ENCODE measurements at regions of chr14 and their contacts with region 1.

Region 1: DNA sequence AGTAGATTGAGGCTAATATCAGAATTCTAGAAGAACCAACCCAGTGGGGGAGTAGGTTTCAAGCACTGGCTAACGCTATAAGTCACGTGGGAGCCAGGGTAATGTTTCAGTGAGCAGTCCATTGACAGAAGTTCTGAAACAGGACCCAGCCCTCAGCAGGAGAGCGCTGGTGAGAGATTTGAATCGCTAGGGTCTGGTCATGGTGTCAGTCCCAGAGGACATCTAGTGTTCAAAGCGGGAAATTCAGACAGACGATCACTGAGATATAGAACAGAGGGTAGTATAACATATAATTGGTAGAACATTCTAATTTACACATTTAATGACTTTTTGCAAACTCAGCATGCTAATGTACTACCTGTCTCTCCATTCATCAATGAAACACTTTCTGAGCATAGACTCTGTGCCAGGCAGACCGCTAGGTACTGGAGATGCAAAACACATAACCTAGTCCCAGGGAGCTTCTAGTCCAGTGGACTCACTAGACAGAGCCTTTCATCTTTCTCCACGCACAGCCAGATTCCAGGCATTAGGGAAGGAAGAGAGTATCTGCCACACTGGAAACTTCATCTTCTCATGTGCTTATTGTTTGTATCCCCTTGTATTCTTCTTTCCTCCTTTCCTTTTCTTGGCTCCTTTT is 35.4 kb upstream of the RNASE3 start:
- DNase-seq: peak; percentile 22
- ATAC-seq: peak; percentile 99
- H3K4me3 Mint-ChIP-seq: no peak overlapping the region
- H3K27ac Mint-ChIP-seq: no peak overlapping the region
- H3K4me1 Mint-ChIP-seq: peaks cover 4% of the 10 kb centered on the region
- H3K27me3 Mint-ChIP-seq: peaks cover 22% of the 10 kb centered on the region
- CTCF ChIP-seq: peak; percentile 56

Region 2: DNA sequence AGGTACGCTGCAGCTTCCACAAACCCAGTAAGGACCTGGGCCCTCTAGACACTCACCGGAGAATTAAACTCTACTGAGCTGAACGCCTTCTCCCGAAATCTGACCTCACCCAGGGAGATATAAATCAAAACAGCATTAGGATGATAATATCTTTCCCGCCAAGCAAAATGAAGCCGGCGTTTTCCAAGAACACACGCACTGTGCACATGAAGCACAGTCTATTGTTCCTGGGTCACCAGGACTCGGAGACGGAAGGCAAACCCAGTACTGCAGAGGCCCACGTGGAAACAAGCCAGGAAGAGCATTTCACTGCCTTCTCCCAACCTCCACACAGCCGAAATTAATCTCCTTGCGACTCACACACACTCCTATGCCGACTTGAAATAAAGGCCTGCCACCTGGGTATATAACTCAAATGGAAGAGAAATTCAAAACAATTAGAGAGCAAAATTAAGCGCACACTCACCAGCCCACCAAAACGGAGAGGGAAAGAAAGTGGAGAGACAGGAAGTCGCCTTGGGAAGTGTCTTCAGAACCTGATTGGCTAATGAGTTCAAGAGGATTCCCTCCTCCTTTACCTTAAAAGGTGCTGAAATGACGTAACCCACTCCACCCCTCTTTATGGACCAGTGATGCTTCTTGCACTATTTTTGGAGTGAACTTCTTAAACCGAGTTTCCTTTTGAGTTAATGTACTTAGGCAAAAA is 522.8 kb before region 1 on chr14 and contains the start of gene CCNB1IP1:
- CTCF ChIA-PET with region 1: no interaction called
- POLR2A ChIA-PET with region 1: no interaction called
- intact Hi-C with region 1: loop called (anchors 5 kb)
- DNase-seq: no peak
- ATAC-seq: peak; percentile 97
- H3K4me3 Mint-ChIP-seq: peak within 1 kb of the TSS; percentile 99
- H3K27ac Mint-ChIP-seq: peak within 1 kb of the TSS; percentile 89
- H3K4me1 Mint-ChIP-seq: peaks cover 29% of the 10 kb centered on the region
- H3K27me3 Mint-ChIP-seq: no peaks in the 10 kb centered on the region
- CTCF ChIP-seq: no peak
- total RNA-seq, gene CCNB1IP1: 34.0 and 35.3 TPM in 2 replicates

Region 3: GRCh38 chr14:20597103-20597502 is 258.7 kb before region 1 on chr14:
- CTCF ChIA-PET with region 1: no interaction called
- POLR2A ChIA-PET with region 1: no interaction called
- intact Hi-C with region 1: no loop called
- DNase-seq: no peak
- ATAC-seq: no peak
- H3K4me3 Mint-ChIP-seq: no peak overlapping the region
- H3K27ac Mint-ChIP-seq: no peak overlapping the region
- H3K4me1 Mint-ChIP-seq: no peaks in the 10 kb centered on the region
- H3K27me3 Mint-ChIP-seq: peaks cover 2% of the 10 kb centered on the region
- CTCF ChIP-seq: no peak

Region 4: DNA sequence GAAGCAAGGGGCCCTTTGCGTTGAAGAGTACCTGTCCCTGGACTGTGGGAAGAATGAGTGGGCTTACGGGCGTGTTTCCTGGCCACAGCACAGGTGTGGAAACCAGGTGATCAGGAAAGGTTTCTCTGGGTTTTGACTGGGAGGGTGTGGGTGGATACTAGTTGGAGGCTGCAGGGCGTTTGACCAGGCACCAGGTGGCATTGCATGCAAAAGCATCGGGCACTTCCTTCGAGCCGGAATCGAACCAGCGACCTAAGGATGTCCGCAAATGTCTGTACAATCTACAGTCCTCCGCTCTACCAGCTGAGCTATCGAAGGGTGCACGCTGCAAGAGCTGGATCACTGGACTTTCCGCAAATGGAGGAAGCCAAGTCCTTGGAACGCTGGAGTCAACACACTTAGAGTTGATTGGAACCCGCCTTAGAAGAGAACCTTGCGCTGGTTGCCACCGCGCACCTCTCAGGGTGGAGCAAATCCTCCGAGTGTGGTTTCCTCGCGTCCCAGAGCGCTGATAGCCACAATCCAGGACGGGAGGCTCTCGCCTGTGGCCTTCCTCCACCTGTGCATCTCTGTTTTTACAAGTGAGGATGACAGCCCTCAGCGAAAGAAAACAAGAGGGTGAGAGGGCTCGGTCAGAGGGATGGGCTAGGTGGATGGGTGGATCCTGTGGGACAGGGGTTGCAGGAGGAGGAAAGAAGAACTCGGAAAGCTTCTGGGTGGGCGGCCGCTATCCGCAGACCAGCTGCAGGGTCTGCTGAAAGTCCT is 192.6 kb before region 1 on chr14:
- CTCF ChIA-PET with region 1: interaction called, 4 read pairs
- POLR2A ChIA-PET with region 1: no interaction called
- intact Hi-C with region 1: loop called (anchors 1 kb)
- DNase-seq: peak; percentile 67
- ATAC-seq: peak; percentile 85
- H3K4me3 Mint-ChIP-seq: peak overlapping the region; percentile 87
- H3K27ac Mint-ChIP-seq: peak overlapping the region; percentile 67
- H3K4me1 Mint-ChIP-seq: peaks cover 53% of the 10 kb centered on the region
- H3K27me3 Mint-ChIP-seq: no peaks in the 10 kb centered on the region
- CTCF ChIP-seq: no peak

Region 5: GRCh38 chr14:20757965-20758364 is 97.8 kb before region 1 on chr14:
- CTCF ChIA-PET with region 1: interaction called, 15 read pairs
- POLR2A ChIA-PET with region 1: no interaction called
- intact Hi-C with region 1: loop called (anchors 1 kb)
- DNase-seq: no peak
- ATAC-seq: peak; percentile 25
- H3K4me3 Mint-ChIP-seq: no peak overlapping the region
- H3K27ac Mint-ChIP-seq: no peak overlapping the region
- H3K4me1 Mint-ChIP-seq: peaks cover 2% of the 10 kb centered on the region
- H3K27me3 Mint-ChIP-seq: no peaks in the 10 kb centered on the region
- CTCF ChIP-seq: no peak

Region 6: GRCh38 chr14:20809917-20810316 is 45.9 kb before region 1 on chr14:
- CTCF ChIA-PET with region 1: no interaction called
- POLR2A ChIA-PET with region 1: no interaction called
- intact Hi-C with region 1: no loop called
- DNase-seq: no peak
- ATAC-seq: no peak
- H3K4me3 Mint-ChIP-seq: no peak overlapping the region
- H3K27ac Mint-ChIP-seq: no peak overlapping the region
- H3K4me1 Mint-ChIP-seq: peaks cover 4% of the 10 kb centered on the region
- H3K27me3 Mint-ChIP-seq: peaks cover 10% of the 10 kb centered on the region
- CTCF ChIP-seq: no peak

Region 7: DNA sequence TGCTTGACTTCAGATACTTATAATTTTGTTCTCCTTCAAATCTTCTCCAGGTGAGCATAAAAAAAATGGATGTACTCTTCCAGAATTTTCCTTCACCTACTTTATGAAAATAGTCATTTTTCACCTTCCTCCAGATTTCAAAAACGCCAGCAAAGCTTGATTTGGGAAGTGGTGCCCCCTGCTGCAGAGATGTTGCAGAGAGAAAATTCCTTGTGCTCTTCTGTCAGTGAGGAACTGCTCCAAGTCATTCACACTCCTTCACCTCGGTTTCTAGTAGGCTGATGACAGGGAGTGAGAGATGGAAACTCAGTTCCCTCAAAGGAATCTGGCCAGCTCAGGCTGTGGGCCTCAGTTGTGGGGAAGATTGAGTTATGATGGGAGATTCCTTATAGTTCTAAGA is 11.2 kb after region 1 on chr14:
- CTCF ChIA-PET with region 1: interaction called, 29 read pairs
- POLR2A ChIA-PET with region 1: no interaction called
- intact Hi-C with region 1: no loop called
- DNase-seq: no peak
- ATAC-seq: no peak
- H3K4me3 Mint-ChIP-seq: no peak overlapping the region
- H3K27ac Mint-ChIP-seq: no peak overlapping the region
- H3K4me1 Mint-ChIP-seq: no peaks in the 10 kb centered on the region
- H3K27me3 Mint-ChIP-seq: peaks cover 30% of the 10 kb centered on the region
- CTCF ChIP-seq: no peak

Region 8: GRCh38 chr14:20970983-20971704 is 115.4 kb after region 1 on chr14:
- CTCF ChIA-PET with region 1: interaction called, 33 read pairs
- POLR2A ChIA-PET with region 1: no interaction called
- intact Hi-C with region 1: loop called (anchors 1 kb)
- DNase-seq: peak; percentile 77
- ATAC-seq: peak; percentile 95
- H3K4me3 Mint-ChIP-seq: peak overlapping the region; percentile 90
- H3K27ac Mint-ChIP-seq: no peak overlapping the region
- H3K4me1 Mint-ChIP-seq: peaks cover 9% of the 10 kb centered on the region
- H3K27me3 Mint-ChIP-seq: peaks cover 50% of the 10 kb centered on the region
- CTCF ChIP-seq: no peak

Measured in activated B cell treated with CpG ODN at 0.5 μM for 24 hours (primary cell).